ENCODE measurements at regions of chr6 and their contacts with region 1.

Region 1: GRCh38 chr6:159013229-159013628 is 13.2 kb upstream of the RSPH3 start:
- DNase-seq: no peak
- H3K4me3 ChIP-seq: no peak overlapping the region
- H3K27ac ChIP-seq: no peak overlapping the region
- H3K4me1 ChIP-seq: no peaks in the 10 kb centered on the region
- H3K27me3 ChIP-seq: no peaks in the 10 kb centered on the region
- CTCF ChIP-seq: no peak
- POLR2A ChIP-seq: no peak

Region 2: GRCh38 chr6:159104163-159104925 is 91.1 kb after region 1 on chr6:
- intact Hi-C with region 1: loop called in 1 of 2 experiments (anchors 10 kb)
- DNase-seq: peak; percentile 59 to 77 (median 74)
- H3K4me3 ChIP-seq: no peak overlapping the region
- H3K27ac ChIP-seq: no peak overlapping the region
- H3K4me1 ChIP-seq: peaks cover 0 to 3% of the 10 kb centered on the region in 2 donors
- H3K27me3 ChIP-seq: no peaks in the 10 kb centered on the region
- CTCF ChIP-seq: peak; percentile 74 to 90 (median 86)
- POLR2A ChIP-seq: no peak

Measured in adrenal gland (tissue), 19 donors.